Activated CD4-positive, alpha-beta memory T cell treated with anti-CD3 and anti-CD28 coated beads, Interleukin-2, amount 10 ng/mL, durations not matched to agents 7 days and 5 days (primary cell): ENCODE measurements at regions of chr17 and their contacts with region 1.

Region 1: DNA sequence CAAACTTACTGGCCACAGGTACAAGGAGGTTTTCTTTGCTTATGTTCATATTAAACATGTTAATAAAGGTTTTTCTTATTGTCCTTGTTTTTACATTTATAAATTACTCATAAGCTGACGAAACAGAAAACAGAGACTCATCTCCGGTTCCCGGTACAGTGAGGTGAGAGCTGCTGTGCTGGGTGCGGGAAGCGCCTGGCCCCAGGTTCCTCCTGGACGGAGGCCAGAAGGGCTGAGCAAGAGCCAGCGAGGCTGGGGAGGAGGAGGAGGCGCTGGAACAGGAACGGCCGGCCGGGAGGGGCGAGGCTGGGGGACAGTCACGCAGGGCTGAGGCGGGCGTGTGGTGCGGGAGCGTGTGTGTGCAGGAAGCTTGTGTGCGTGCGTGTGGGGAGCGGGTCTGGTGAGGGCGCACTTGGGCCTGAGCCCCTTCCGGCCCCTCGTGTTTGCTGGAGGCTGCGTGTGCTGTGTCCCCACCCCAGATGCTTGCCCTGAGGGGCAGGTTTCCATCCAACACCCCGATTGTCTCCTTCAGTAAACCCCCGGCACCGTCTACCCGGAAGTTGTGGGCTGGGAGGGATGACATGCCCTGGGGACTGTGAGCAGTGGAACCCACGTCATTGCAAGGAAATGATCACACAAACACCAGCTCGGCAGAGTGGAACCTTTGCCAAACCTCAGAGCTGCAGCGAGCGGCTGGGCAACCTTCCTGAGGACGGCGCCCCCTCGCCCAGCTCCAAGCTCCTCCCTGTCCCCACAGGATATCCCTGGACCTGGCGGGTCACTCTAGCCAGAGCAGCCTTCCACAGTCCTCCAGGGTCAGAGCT is 19.5 kb downstream of the CD7 start:
- DNase-seq: peak; percentile 93
- H3K4me3 Mint-ChIP-seq: peak overlapping the region; percentile 88
- H3K27ac Mint-ChIP-seq: peak overlapping the region; percentile 100
- H3K4me1 Mint-ChIP-seq: peaks cover 87% of the 10 kb centered on the region
- H3K27me3 Mint-ChIP-seq: no peaks in the 10 kb centered on the region

Region 2: DNA sequence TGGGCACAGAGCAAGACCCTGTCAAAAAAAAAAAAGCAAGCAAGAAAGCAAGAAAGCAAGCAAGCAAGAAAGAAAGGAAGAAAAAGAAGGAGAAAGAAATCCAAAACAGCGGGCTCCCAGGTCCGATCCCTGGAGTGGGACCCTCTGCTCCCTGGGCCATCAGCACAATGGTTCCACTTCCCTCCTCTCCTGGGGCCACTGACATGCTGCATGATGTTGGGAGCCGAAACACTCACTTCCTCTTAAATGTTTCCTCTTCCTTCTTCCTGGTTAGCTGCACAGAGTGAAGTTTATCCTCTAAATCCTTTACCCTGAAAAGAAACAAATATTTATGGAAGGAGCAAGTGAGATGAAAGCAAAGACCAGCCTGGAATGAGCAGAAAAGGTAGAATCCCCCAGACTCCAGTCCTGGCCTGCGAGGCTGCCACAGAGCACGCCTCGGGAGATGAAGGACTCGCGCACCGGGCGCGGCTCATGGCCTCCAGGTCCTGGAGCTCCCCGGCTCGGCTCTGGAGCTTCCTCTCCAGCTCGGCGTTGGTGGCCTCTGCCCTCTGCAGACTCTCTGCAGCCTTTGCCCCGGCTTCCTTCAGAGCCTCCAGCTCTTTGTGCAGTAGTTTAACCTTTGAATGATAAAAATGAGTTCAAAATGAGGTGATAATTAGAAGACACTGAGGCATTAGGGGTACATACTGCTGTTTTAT is 104.3 kb before region 1 on chr17:
- CTCF ChIA-PET with region 1: no interaction called
- POLR2A ChIA-PET with region 1: no interaction called
- DNase-seq: no peak
- H3K4me3 Mint-ChIP-seq: no peak overlapping the region
- H3K27ac Mint-ChIP-seq: no peak overlapping the region
- H3K4me1 Mint-ChIP-seq: peaks cover 14% of the 10 kb centered on the region
- H3K27me3 Mint-ChIP-seq: no peaks in the 10 kb centered on the region

Region 3: GRCh38 chr17:82230627-82231311 is 67.2 kb before region 1 on chr17:
- CTCF ChIA-PET with region 1: interaction called, 16 read pairs
- POLR2A ChIA-PET with region 1: interaction called, 21 read pairs
- DNase-seq: peak; percentile 76
- H3K4me3 Mint-ChIP-seq: peak overlapping the region; percentile 91
- H3K27ac Mint-ChIP-seq: no peak overlapping the region
- H3K4me1 Mint-ChIP-seq: peaks cover 32% of the 10 kb centered on the region
- H3K27me3 Mint-ChIP-seq: no peaks in the 10 kb centered on the region

Region 4: GRCh38 chr17:82273327-82274133 is 24.4 kb before region 1 on chr17 and contains the start of gene CSNK1D:
- CTCF ChIA-PET with region 1: interaction called, 4 read pairs
- POLR2A ChIA-PET with region 1: interaction called, 49 read pairs
- DNase-seq: peak; percentile 94
- H3K4me3 Mint-ChIP-seq: peak within 1 kb of the TSS; percentile 97
- H3K27ac Mint-ChIP-seq: peak within 1 kb of the TSS; percentile 93
- H3K4me1 Mint-ChIP-seq: peaks cover 41% of the 10 kb centered on the region
- H3K27me3 Mint-ChIP-seq: peaks cover 2% of the 10 kb centered on the region
- total RNA-seq, gene CSNK1D: 116 TPM

Region 5: DNA sequence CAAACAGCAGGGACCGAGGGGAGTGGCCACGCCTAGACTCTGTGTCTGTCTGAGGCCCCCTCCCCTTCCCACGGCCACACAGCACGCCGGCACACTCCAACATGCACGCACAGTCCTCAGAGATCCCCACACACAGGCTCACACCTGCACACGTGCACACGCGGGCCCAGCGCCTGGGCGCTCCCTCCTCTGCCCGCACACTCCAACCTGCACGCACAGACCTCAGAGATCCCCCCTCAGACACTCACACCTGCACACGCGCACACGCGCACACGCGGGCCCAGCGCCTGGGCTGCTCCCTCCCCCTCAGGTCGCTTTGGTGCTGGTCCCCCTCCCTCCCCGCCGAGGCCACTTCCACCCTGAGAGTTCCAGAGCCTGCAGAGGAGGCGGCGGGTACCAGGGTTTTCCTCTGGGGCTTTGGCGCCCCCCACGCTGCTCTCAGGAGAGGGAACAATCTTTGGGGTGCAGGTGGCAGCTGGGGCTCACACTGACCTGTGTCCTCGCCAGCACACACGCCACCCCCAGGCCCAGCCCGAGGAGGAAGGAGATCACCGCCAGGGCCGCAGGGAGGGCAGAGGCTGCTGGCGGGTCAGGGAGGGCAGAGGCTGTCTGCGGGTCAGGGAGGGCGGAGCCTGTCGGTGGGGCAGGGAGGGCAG is 17.9 kb after region 1 on chr17:
- CTCF ChIA-PET with region 1: interaction called, 32 read pairs
- POLR2A ChIA-PET with region 1: interaction called, 120 read pairs
- DNase-seq: peak; percentile 50
- H3K4me3 Mint-ChIP-seq: peak overlapping the region; percentile 83
- H3K27ac Mint-ChIP-seq: peak overlapping the region; percentile 56
- H3K4me1 Mint-ChIP-seq: peaks cover 20% of the 10 kb centered on the region
- H3K27me3 Mint-ChIP-seq: peaks cover 4% of the 10 kb centered on the region

Region 6: GRCh38 chr17:82332669-82333278 is 34.8 kb after region 1 on chr17:
- CTCF ChIA-PET with region 1: interaction called, 3 read pairs
- POLR2A ChIA-PET with region 1: interaction called, 25 read pairs
- DNase-seq: peak; percentile 48
- H3K4me3 Mint-ChIP-seq: peak overlapping the region; percentile 84
- H3K27ac Mint-ChIP-seq: peak overlapping the region; percentile 78
- H3K4me1 Mint-ChIP-seq: peaks cover 35% of the 10 kb centered on the region
- H3K27me3 Mint-ChIP-seq: peaks cover 7% of the 10 kb centered on the region

Region 7: DNA sequence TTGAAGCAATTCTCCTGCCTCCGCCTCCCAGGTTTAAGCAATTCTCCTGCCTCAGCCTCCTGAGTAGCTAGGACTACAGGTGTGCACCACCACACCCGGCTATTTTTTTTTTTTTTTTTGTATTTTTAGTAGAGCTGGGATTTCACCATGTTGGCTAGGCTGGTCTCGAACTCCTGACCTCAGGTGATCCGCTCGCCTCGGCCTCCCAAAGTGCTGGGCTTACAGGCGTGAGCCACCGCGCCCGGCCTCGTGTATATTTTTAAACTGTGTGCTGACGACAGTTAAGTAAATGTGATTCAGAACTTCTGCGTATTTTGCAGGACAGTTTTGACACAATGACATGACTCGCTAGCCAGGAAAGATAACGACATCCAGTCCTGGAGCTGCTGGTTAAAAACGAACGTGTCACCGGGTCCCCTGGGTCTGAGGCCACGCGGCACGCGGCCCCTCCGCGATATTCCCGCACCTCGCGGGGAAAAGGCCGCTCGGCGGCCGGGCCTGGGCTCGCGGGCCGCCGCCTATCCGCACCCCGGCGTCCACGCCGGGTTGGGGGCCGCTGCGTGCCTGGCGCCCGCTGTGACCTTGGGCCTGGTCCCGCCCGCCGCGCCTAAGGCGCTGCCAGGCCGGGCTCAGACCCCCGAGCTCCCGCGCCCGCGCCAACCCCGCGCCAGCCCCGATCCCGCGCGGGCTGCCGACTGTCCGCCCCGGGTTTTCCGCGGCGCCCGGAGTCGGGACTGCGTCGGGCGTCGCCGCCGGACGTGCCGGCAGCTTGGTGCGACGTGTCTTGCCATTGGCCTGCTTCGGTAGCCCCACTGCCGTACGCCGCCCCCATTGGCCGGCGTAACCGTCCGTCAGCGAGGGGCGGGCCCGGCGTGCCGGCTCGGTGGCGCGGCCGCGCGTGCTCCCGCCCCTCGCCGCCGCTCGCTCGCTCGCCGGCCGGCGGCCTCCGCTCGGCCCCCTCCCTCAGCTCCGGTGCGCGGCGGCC is 221.2 kb after region 1 on chr17 and contains the start of gene FOXK2:
- CTCF ChIA-PET with region 1: no interaction called
- POLR2A ChIA-PET with region 1: interaction called, 11 read pairs
- DNase-seq: peak; percentile 95
- H3K4me3 Mint-ChIP-seq: peak within 1 kb of the TSS; percentile 82
- H3K27ac Mint-ChIP-seq: peak within 1 kb of the TSS; percentile 81
- H3K4me1 Mint-ChIP-seq: peaks cover 26% of the 10 kb centered on the region
- H3K27me3 Mint-ChIP-seq: no peaks in the 10 kb centered on the region
- total RNA-seq, gene FOXK2: 53.3 to 68.2 TPM